SK-N-SH (cell line): ENCODE measurements at regions of chr16 and their contacts with region 1.

Region 1: GRCh38 chr16:75198135-75198600 is 8.8 kb downstream of the CTRB2 start:
- DNase-seq: peak; percentile 71
- H3K4me3 ChIP-seq: peak overlapping the region in 1 of 2 experiments; percentile 19; a peak in 1 of 4 replicates
- H3K27ac ChIP-seq: peak overlapping the region in 1 of 2 experiments; percentile 8; a peak in 1 of 4 replicates
- H3K4me1 ChIP-seq: peaks cover 0 to 8% of the 10 kb centered on the region in 2 experiments; a peak in 1 of 4 replicates
- H3K27me3 ChIP-seq: no peaks in the 10 kb centered on the region
- CTCF ChIP-seq: no peak
- EP300 ChIP-seq: peak in 1 of 2 experiments; percentile 32; a peak in 1 of 4 replicates
- RAD21 ChIP-seq: no peak

Region 2: DNA sequence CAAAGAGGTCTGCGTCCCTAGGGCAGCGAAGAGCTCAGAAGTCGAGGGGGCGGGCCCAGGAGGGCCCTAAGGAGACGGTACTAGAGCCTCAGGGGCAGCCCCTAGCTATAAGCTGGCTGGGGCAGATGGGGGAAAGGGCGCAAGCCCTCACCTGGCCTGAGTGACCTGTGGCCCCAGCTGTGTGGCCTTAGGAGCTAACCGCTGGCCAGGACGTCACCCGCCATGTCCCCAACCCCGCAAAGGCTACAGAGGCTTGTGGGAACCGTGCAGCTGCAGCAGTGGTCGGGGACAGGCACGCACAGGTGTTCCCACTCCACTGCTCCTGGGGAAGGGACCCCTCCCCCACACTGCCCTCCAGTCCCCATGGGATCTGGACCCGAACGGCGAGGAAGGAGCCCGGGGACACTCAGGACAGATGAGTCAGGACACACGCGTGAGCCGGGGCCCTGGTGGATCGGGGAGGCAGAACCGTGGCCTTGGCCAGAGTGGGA is 10.8 kb after region 1 on chr16:
- CTCF ChIA-PET with region 1: interaction called, 11 read pairs
- POLR2A ChIA-PET with region 1: no interaction called
- DNase-seq: no peak
- H3K4me3 ChIP-seq: no peak overlapping the region
- H3K27ac ChIP-seq: no peak overlapping the region
- H3K4me1 ChIP-seq: no peaks in the 10 kb centered on the region
- H3K27me3 ChIP-seq: no peaks in the 10 kb centered on the region
- CTCF ChIP-seq: no peak
- EP300 ChIP-seq: no peak
- RAD21 ChIP-seq: no peak

Region 3: DNA sequence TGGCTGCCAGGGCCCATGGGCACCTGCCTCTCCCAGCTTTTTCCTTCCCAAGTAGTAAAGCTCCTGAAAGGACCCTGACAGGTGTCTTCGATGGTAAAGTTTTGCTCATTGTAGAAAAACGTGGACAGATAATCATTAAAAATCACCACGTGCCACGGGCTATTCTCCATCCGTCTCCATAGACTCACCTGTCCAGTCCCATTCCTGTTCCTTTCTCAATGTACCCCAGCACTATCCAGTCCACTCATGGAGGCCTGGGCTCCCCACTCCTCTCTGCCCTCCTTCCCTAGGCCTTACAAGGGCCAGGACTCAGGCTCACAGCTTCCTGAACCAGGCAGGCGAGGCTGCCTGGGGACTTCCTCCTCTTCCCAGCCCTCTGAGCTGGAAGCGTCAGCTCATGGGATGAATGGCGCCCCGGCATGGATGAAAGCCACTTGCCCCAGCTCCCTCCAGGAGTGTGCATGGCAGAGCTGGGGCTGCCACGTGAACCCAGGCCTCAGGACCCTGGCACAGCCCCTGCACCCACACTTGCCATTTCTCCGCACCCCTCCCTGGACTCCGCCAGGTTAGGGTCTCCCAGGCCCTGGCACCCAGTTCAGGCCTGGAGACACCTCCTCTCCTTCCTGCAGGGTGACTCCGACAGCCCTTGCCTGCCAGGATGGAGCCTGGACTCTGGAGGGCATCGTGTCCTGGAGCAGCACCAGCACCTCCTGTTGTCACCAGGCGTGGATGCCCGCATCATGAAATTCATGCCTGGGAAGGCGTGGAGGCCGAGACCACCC is 29.4 kb after region 1 on chr16:
- CTCF ChIA-PET with region 1: interaction called, 58 read pairs
- POLR2A ChIA-PET with region 1: no interaction called
- DNase-seq: no peak
- H3K4me3 ChIP-seq: no peak overlapping the region
- H3K27ac ChIP-seq: no peak overlapping the region
- H3K4me1 ChIP-seq: peaks cover 0 to 2% of the 10 kb centered on the region in 2 experiments; a peak in 1 of 4 replicates
- H3K27me3 ChIP-seq: no peaks in the 10 kb centered on the region
- CTCF ChIP-seq: no peak
- EP300 ChIP-seq: no peak
- RAD21 ChIP-seq: no peak

Region 4: GRCh38 chr16:75379911-75380847 is 182.0 kb after region 1 on chr16:
- CTCF ChIA-PET with region 1: interaction called, 26 read pairs
- POLR2A ChIA-PET with region 1: no interaction called
- DNase-seq: no peak
- H3K4me3 ChIP-seq: no peak overlapping the region
- H3K27ac ChIP-seq: peak overlapping the region in 1 of 2 experiments; percentile 48; a peak in 2 of 4 replicates
- H3K4me1 ChIP-seq: peaks cover 7 to 36% of the 10 kb centered on the region in 2 experiments
- H3K27me3 ChIP-seq: no peaks in the 10 kb centered on the region
- CTCF ChIP-seq: no peak
- EP300 ChIP-seq: no peak
- RAD21 ChIP-seq: no peak

Region 5: DNA sequence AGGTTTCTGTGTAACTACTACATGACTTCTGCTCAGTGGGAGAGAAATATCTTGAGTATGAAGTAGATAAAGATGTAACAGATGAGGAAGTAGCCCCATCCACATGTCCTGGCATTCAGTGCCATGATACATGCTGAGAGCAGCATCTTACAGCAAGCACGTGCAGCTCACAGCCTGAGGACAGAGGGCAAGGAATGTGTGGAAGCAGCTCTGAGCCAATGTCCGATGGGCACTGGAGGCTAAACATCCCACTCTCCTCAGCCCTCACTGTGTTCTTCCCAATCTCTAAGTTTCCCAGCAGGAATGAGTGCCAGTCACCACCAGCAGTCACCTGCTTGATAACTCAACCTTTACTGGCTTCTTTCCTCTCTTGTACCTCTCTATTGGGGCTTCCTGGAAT is 194.7 kb after region 1 on chr16:
- CTCF ChIA-PET with region 1: interaction called, 105 read pairs
- POLR2A ChIA-PET with region 1: no interaction called
- DNase-seq: no peak
- H3K4me3 ChIP-seq: no peak overlapping the region
- H3K27ac ChIP-seq: no peak overlapping the region
- H3K4me1 ChIP-seq: peaks cover 0 to 12% of the 10 kb centered on the region in 2 experiments; a peak in 2 of 4 replicates
- H3K27me3 ChIP-seq: no peaks in the 10 kb centered on the region
- CTCF ChIP-seq: no peak
- EP300 ChIP-seq: no peak
- RAD21 ChIP-seq: no peak

Region 6: GRCh38 chr16:75464130-75464918 is 266.2 kb after region 1 on chr16 and contains the start of gene TMEM170A:
- CTCF ChIA-PET with region 1: interaction called, 17 read pairs
- POLR2A ChIA-PET with region 1: interaction called, 4 read pairs
- DNase-seq: peak; percentile 98
- H3K4me3 ChIP-seq: peak within 1 kb of the TSS; percentile 69 to 85
- H3K27ac ChIP-seq: peak within 1 kb of the TSS; percentile 80 to 95
- H3K4me1 ChIP-seq: peaks cover 0 to 3% of the 10 kb centered on the region in 2 experiments; a peak in 2 of 4 replicates
- H3K27me3 ChIP-seq: no peaks in the 10 kb centered on the region
- CTCF ChIP-seq: peak; percentile 100
- EP300 ChIP-seq: no peak
- RAD21 ChIP-seq: peak; percentile 77; the same call in 1 of the 2 replicates
- polyA plus RNA-seq, gene TMEM170A: 9.2 and 11.0 TPM in 2 replicates

Region 7: DNA sequence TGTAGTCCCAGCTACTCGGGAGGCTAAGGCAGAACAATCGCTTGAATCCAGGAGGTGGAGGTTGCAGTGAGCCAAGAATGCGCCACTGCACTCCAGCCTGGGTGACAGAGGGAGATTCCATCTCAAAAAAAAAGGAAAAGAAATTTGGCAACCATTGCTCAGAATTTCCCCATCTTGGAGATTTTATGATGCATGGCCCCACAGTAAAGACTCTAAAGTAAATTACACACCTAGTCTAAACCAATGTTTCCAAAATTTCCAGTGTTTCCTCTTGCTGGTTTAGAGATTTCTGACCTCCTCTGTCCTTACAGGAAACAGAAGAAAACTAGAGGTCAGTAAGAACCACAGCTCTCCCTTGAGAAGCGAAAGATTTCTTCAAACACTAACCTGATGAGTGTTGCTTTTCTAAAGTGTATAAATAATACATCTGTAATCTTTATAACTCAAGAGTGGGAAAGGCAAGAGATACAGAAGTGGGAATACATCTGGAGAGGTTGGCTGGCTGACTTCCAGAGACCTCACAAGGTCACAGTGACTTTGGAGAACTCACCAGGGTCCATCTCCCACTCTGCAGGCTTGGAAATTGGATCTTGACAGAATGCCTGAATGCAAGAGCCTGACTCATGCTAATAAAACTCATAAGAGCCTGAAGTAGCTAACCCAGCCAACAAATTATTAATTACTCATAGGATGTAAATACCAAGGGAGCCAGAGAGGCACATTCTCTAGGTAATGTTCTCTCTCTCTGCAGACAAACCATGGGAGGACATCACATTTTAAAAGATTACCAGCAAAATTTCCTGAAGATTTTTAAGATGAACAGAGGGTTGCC is 416.1 kb after region 1 on chr16:
- CTCF ChIA-PET with region 1: no interaction called
- POLR2A ChIA-PET with region 1: no interaction called
- DNase-seq: no peak
- H3K4me3 ChIP-seq: no peak overlapping the region
- H3K27ac ChIP-seq: peak overlapping the region; percentile 14 to 84; a peak in 3 of 4 replicates
- H3K4me1 ChIP-seq: peaks cover 0 to 11% of the 10 kb centered on the region in 2 experiments; a peak in 1 of 4 replicates
- H3K27me3 ChIP-seq: no peaks in the 10 kb centered on the region
- CTCF ChIP-seq: no peak
- EP300 ChIP-seq: peak in 1 of 2 experiments; percentile 59; a peak in 2 of 4 replicates
- RAD21 ChIP-seq: no peak